ENCODE measurements at regions of chr3 and their contacts with region 1.

Region 1: DNA sequence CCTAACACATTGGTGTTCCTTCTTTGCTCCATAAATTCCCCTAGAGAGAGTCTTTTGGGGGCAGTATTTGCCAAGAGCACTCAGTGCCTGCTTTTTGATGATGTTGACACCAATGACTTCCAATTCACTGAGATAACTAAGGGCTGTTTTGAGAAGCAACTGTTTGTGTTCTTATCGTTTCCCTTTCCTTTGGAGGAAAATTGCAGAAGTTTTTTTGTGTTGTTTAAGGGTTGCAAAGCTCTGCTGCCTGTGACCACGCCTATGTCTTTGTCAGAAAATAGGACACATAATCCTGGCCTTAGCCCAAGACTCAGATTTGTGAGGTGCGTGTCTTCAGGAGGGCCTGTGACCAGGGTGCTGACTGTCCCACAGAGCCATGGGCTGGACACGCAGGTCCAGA is 99.6 kb downstream of the FAM43A start:
- DNase-seq: no peak

Region 2: GRCh38 chr3:194824701-194825111 is 39.4 kb after region 1 on chr3:
- intact Hi-C with region 1: loop called (anchors 2 kb)
- DNase-seq: peak; percentile 90

Region 3: DNA sequence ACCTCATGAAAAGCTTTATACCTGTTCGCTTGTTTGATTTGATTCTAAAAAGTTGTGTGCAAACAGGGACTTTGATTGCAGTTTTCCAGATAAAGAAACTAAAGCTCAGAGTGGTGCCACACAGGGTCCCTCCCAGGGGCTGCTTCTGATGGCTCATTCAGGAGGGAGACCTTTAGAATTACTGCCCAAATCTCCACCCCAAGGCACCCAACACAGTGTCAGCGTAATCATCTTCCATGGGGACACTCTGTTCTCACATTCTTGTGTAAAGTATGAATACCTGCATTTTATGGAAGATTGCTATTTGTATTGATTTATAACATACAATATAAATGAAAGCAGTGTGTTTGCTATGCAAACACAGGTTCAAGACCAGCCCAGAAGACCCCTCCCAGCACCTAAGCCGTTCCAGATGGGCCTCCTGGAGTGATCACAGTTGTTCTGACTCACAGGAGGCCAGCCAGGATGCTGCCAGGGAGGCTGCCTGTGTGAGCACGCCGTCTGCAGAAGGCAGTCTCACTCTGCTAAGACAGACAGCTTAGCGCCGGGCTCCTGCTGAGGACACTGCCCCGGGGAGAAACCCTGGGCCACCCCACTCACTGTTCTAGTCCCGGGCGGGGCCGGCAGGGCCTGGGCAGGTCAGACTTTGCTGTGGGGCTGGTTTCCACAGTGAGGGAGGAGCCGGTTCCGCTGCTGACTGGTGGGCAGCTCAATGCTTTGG is 86.0 kb after region 1 on chr3:
- intact Hi-C with region 1: loop called (anchors 5 kb)
- DNase-seq: no peak

Measured in cardiac septum (tissue), 1 donor.